MCF 10A (cell line): ENCODE measurements at regions of chr1 and their contacts with region 1.

Region 1: DNA sequence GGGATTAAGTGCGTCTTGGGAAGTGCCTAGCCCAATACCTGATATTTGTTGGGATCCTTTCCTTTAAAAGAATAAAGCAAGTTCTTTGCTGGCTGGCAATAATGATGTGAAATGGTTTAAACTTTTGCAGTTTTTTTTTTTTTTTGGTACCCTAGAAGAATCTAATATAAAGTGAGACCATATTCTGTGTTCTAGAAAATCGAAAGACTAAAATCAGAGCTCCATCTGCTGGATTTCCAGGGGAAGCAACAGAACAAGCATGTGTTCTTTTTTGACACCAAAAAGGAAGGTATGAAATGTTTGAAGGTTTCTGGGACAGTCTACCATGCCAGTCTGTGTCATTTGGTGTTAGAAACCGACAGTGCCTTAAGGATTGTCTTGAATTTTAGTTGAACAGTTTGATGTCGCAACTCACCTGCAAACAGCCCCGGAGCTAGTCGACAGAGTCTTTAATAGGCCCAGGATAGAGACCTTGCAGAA is 6.4 kb downstream of the UTP11 start:
- DNase-seq: peak; percentile 36
- H3K4me3 Mint-ChIP-seq: no peak overlapping the region
- H3K27ac Mint-ChIP-seq: no peak overlapping the region
- H3K4me1 Mint-ChIP-seq: peaks cover 4% of the 10 kb centered on the region
- H3K27me3 Mint-ChIP-seq: no peaks in the 10 kb centered on the region
- CTCF ChIP-seq: peak; percentile 37

Region 2: GRCh38 chr1:37890378-37891014 is 128.4 kb before region 1 on chr1:
- CTCF ChIA-PET with region 1: interaction called, 11 read pairs
- POLR2A ChIA-PET with region 1: no interaction called
- intact Hi-C with region 1: loop called (anchors 1 kb)
- DNase-seq: peak; percentile 43
- H3K4me3 Mint-ChIP-seq: no peak overlapping the region
- H3K27ac Mint-ChIP-seq: no peak overlapping the region
- H3K4me1 Mint-ChIP-seq: no peaks in the 10 kb centered on the region
- H3K27me3 Mint-ChIP-seq: no peaks in the 10 kb centered on the region
- CTCF ChIP-seq: peak; percentile 42